CD8-positive, alpha-beta T cell (primary cell): ENCODE measurements at regions of chr14 and their contacts with region 1.

Region 1: DNA sequence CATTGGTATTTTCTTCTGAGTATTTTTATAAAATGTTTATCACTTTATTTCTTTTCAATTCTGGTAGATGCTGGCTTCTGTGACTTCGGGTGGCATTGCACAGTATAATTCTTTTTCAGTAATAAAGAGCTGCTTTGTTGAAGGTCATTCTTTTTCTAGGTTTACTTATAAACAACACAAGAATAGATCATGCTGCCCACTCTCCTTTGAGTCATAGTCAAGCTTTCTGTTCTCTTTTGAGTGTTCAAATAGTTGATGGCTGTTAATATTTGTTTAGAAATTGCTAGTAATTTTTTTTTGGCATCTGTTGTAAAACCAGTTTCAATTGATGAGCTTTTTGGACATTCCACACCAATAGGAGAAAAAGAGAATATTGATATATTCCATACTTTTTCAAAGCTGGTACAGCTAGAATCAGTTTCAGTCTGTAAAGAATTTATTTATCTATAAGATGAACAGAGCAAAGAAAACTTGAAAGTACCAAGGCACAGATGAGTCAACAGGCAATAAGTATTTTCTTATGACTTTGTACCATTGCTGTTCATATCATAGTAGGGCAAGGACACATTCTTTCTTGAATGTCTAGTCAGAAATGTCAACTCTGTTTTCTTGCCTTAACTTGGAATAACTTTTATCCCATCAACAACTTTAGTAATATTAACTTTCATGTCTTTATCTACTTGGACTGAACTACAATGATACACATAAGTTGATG is 513.0 kb upstream of the SEL1L start:
- DNase-seq: no peak
- ATAC-seq: no peak
- H3K4me3 ChIP-seq: no peak overlapping the region
- H3K4me3 Mint-ChIP-seq: no peak overlapping the region
- H3K27ac ChIP-seq: no peak overlapping the region
- H3K27ac Mint-ChIP-seq: no peak overlapping the region
- H3K4me1 ChIP-seq: no peaks in the 10 kb centered on the region
- H3K4me1 Mint-ChIP-seq: no peaks in the 10 kb centered on the region
- H3K27me3 ChIP-seq: no peaks in the 10 kb centered on the region
- H3K27me3 Mint-ChIP-seq: no peaks in the 10 kb centered on the region
- CTCF ChIP-seq: no peak

Region 2: DNA sequence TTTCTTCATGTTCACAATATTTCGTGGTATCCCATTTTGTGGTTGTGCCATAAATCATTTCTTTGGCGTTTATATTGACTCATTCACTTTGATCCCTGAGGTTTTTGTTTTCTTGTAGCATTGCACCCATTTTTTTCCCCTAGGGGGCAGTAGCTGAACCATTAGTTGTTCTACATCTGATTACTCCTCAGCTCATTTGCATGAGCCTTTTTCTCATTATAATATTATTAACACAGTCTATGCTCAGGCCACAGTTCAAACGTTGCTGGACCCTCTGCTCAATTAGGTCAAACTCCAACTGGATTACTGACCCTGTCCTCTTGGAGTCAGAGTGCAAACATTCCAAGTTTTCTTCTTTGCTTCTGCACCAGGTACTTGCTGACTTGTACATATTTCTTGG is 37.6 kb before region 1 on chr14:
- CTCF ChIA-PET with region 1: no interaction called
- POLR2A ChIA-PET with region 1: no interaction called
- intact Hi-C with region 1: no loop called
- DNase-seq: no peak
- ATAC-seq: no peak
- H3K4me3 ChIP-seq: no peak overlapping the region
- H3K4me3 Mint-ChIP-seq: no peak overlapping the region
- H3K27ac ChIP-seq: no peak overlapping the region
- H3K27ac Mint-ChIP-seq: no peak overlapping the region
- H3K4me1 ChIP-seq: no peaks in the 10 kb centered on the region
- H3K4me1 Mint-ChIP-seq: no peaks in the 10 kb centered on the region
- H3K27me3 ChIP-seq: no peaks in the 10 kb centered on the region
- H3K27me3 Mint-ChIP-seq: no peaks in the 10 kb centered on the region
- CTCF ChIP-seq: no peak

Region 3: DNA sequence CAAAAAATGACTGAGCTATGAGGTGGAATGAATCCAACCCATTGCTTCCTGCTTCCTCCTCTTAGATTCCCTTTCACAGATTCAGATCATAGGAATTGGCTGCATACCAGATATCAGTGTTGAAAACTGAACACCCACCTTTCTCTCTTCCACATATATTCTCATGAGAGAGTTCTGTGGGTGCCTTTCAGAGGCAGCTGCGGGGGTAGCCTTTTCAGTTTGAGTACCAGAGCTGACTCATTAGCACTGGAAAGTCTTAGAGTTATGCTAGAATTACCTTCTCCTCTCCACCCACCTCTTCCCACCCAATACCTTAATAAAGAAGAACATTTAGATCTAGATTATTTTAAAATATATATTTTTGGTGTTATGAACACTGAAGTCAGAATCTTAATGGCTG is 17.6 kb before region 1 on chr14:
- CTCF ChIA-PET with region 1: no interaction called
- POLR2A ChIA-PET with region 1: no interaction called
- intact Hi-C with region 1: loop called in 1 of 2 experiments (anchors 1 kb)
- DNase-seq: no peak
- ATAC-seq: no peak
- H3K4me3 ChIP-seq: no peak overlapping the region
- H3K4me3 Mint-ChIP-seq: no peak overlapping the region
- H3K27ac ChIP-seq: no peak overlapping the region
- H3K27ac Mint-ChIP-seq: no peak overlapping the region
- H3K4me1 ChIP-seq: no peaks in the 10 kb centered on the region
- H3K4me1 Mint-ChIP-seq: no peaks in the 10 kb centered on the region
- H3K27me3 ChIP-seq: no peaks in the 10 kb centered on the region
- H3K27me3 Mint-ChIP-seq: no peaks in the 10 kb centered on the region
- CTCF ChIP-seq: no peak